Sigmoid colon (tissue), 7 donors: ENCODE measurements at regions of chr7 and their contacts with region 1.

Region 1: GRCh38 chr7:87234949-87235348 is 15.4 kb upstream of the TMEM243 start:
- DNase-seq: no peak
- H3K4me3 ChIP-seq: no peak overlapping the region
- H3K27ac ChIP-seq: no peak overlapping the region
- H3K4me1 ChIP-seq: peaks cover 0 to 5% (median 2%) of the 10 kb centered on the region in 4 donors
- H3K27me3 ChIP-seq: no peaks in the 10 kb centered on the region
- CTCF ChIP-seq: no peak
- EP300 ChIP-seq: no peak
- POLR2A ChIP-seq: no peak

Region 2: GRCh38 chr7:86939197-86939814 is 295.6 kb before region 1 on chr7:
- intact Hi-C with region 1: loop called (anchors 5 kb)
- DNase-seq: no peak
- H3K4me3 ChIP-seq: no peak overlapping the region
- H3K27ac ChIP-seq: no peak overlapping the region
- H3K4me1 ChIP-seq: no peaks in the 10 kb centered on the region
- H3K27me3 ChIP-seq: no peaks in the 10 kb centered on the region
- CTCF ChIP-seq: peak; percentile 27 to 76 (median 56)
- EP300 ChIP-seq: no peak
- POLR2A ChIP-seq: no peak

Region 3: DNA sequence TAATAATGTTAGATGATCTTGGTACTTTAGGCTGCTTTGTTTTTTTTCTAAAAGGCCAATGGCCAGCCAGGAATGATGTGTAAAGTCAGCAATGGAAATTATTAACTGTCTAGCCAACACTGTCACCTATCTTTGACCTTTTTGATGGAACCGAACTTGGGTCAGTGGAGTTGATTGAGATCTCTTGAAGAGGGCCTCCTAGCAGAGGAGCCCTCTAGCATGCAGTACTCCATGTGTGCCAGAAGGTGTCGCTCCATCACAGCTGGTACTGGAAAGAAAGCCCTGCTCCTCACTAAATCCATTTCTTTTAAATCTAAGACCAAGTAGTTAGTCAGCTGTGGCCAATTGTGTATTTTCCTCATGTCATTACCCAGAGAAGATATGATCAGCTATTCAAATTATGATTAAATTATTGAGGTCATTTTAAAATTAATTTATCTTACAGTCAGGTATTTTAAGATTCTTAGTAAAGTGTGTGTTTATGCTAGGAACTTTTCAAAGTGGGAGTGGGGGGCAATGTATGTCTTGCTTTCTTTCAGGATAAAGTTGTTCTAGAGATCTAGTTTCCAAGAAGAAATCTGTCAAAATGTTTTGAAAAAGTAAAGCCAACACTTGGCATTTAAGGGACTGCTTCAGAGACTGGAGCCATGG is 77.4 kb after region 1 on chr7:
- intact Hi-C with region 1: no loop called
- DNase-seq: no peak
- H3K4me3 ChIP-seq: no peak overlapping the region
- H3K27ac ChIP-seq: no peak overlapping the region
- H3K4me1 ChIP-seq: no peaks in the 10 kb centered on the region
- H3K27me3 ChIP-seq: no peaks in the 10 kb centered on the region
- CTCF ChIP-seq: peak; percentile 70 to 98 (median 88)
- EP300 ChIP-seq: no peak
- POLR2A ChIP-seq: no peak

Region 4: DNA sequence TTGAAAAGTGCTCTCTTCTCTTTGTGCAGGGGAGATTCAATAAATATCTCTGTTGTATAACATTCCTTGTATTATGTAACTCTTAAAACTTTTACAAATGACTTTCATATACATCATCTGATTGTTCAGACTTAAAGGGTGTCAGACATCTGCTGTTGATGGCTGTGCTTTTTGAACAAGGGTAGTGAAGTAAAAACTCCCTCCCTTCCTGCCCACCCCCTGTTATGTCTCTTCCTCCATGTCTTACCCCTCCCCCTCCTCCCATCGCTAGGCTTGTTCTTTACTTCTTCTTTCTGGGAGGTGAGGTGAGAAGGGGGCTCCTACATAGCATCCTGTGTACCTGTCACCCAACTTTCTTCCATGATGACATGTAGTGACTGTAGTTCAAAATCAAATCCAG is 263.9 kb after region 1 on chr7:
- intact Hi-C with region 1: no loop called
- DNase-seq: no peak
- H3K4me3 ChIP-seq: no peak overlapping the region
- H3K27ac ChIP-seq: no peak overlapping the region
- H3K4me1 ChIP-seq: no peaks in the 10 kb centered on the region
- H3K27me3 ChIP-seq: no peaks in the 10 kb centered on the region
- CTCF ChIP-seq: no peak
- EP300 ChIP-seq: no peak
- POLR2A ChIP-seq: no peak